Activated CD4-positive, alpha-beta memory T cell treated with anti-CD3 and anti-CD28 coated beads, Interleukin-2, amount 10 ng/mL, durations not matched to agents 7 days and 5 days (primary cell): ENCODE measurements at regions of chr16 and their contacts with region 1.

Region 1: DNA sequence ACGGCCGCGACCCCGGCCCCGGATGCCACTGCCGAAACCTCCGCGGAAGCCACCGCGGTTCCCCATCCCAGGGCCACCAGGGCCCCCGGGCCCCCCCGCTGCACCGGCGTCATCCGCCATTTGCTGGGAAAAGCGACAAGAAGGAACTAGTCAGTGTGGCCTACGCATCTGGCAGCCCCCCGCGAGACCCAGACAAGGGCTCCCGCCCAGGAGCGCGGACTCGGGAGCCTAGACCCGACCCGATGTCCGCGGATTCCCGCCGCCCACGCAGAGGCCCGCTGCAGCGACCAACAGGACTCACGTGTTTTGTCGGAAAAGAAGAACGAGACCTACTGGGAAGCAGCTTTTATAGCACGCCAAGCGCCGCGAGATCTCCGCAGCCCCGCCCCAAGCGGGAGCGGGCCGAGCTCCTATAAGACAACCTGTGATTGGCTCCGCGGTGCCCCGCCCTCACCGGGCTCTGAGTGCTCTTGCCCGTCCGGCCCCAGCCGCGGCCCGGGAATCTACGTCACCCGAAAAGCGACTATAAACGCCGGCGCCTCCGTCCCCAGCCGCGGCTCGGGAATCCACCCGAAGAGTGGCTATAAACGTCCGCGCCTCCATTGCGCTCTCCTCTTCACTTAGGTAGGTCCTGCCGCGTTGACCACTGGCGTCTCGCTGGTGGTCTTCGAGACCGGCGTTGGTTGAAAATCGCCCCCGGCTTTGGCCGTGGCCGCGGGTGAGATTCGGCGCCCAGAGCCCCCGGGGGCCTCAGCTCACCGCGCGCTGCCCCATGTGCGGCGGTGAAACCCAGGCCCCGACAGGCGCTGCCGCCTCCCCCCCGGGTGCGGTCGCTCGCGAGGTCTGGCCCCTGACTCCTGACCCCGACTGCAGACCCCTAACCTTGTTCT is at the start of gene RPS2:
- DNase-seq: peak; percentile 99
- H3K4me3 Mint-ChIP-seq: peak within 1 kb of the TSS; percentile 84
- H3K27ac Mint-ChIP-seq: peak within 1 kb of the TSS; percentile 95
- H3K4me1 Mint-ChIP-seq: peaks cover 54% of the 10 kb centered on the region
- H3K27me3 Mint-ChIP-seq: no peaks in the 10 kb centered on the region
- total RNA-seq, gene RPS2: 2,364 to 2,405 TPM

Region 2: GRCh38 chr16:1782352-1783091 is 182.2 kb before region 1 on chr16 and contains the starts of genes NUBP2 and SPSB3:
- CTCF ChIA-PET with region 1: interaction called, 3 read pairs
- POLR2A ChIA-PET with region 1: interaction called, 10 read pairs
- DNase-seq: peak; percentile 99
- H3K4me3 Mint-ChIP-seq: peak within 1 kb of the TSS; percentile 91
- H3K27ac Mint-ChIP-seq: peak within 1 kb of the TSS; percentile 77
- H3K4me1 Mint-ChIP-seq: peaks cover 22% of the 10 kb centered on the region
- H3K27me3 Mint-ChIP-seq: no peaks in the 10 kb centered on the region
- total RNA-seq, gene NUBP2: 40.8 to 43.5 TPM
- total RNA-seq, gene SPSB3: 46.4 to 47.7 TPM

Region 3: DNA sequence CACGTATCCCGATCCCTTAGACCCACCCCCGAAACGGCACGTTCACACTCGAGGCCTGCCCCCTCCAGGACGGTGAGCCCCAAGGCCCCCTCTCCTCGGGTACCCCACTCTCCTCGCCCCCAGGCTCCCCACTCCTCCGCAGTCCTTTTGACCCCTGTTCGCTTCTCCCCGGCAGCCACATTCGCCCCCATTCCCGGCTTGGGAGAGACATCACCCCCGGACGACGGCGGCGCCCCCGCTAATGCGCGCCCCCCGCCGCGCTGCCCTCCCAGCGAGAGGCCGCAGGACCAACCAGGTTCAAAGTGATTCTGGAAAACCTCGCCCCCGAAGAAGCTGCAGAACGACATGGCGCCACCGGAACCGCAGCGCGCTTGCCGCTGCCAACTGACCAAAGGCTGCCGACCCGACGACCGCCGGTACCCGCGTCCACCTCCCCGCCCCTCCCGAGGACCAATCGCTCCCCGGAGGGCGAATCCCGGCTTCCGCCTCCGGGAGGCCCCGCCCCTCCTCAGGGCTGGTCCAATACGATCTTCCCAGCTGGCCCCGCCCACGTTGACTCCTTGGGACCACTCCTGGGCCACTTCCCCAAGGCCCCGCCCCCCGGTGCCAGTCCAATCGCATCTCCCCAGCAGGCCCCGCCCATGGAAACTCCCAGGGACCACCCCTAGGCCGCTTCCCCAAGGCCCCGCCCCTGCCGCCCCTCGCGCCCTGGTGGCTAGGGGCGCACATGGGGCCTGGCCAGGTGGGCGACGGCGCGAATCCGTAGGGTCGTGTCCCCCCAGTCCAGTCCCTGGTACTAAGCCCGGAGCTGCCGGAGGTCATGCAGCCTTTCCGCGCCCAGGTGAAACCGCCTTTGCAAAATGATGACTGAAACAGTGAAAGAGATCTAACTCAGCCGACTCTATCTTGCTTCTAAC is 21.7 kb before region 1 on chr16 and contains the start of gene MSRB1:
- CTCF ChIA-PET with region 1: interaction called, 10 read pairs
- POLR2A ChIA-PET with region 1: interaction called, 32 read pairs
- DNase-seq: peak; percentile 100
- H3K4me3 Mint-ChIP-seq: peak within 1 kb of the TSS; percentile 84
- H3K27ac Mint-ChIP-seq: peak within 1 kb of the TSS; percentile 70
- H3K4me1 Mint-ChIP-seq: peaks cover 27% of the 10 kb centered on the region
- H3K27me3 Mint-ChIP-seq: no peaks in the 10 kb centered on the region
- total RNA-seq, gene MSRB1: 17.9 TPM

Region 4: DNA sequence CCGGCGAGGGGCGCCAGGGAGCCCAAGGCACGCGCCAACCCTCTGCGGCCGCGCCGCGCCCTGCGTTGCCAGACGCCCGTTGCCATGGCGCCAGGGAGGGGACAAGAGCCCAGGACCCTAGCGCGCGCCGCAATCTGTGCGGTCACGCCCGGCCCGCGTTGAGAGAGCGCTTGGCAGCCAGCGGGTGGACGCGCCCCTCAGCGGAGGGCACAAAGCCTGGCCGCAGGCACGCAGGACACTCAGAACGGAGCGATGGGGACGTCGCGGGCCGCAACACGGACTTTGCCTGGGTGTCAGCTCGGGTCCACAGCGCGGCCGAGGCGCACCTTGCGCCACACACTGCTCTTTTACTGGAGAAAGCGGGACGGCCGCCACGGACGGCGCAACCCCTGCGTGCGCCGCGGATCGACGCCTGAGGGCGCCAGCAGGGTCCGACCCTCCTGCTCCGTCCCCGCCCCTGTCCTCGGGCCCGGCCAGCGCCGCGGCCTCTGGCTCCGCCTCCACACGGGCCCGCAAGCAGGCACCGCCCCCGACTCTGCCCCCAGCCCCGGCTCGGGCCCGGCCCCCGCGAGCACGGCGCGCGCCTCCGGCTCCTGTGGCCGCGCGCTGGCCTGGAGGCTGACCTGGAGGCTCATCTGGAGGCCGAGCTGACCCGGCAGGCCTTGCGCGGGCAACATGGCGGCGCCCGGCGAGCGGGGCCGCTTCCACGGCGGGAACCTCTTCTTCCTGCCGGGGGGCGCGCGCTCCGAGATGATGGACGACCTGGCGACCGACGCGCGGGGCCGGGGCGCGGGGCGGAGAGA is 19.0 kb after region 1 on chr16 and contains the start of gene GFER:
- CTCF ChIA-PET with region 1: no interaction called
- POLR2A ChIA-PET with region 1: interaction called, 149 read pairs
- DNase-seq: peak; percentile 83
- H3K4me3 Mint-ChIP-seq: peak within 1 kb of the TSS; percentile 80
- H3K27ac Mint-ChIP-seq: peak within 1 kb of the TSS; percentile 32
- H3K4me1 Mint-ChIP-seq: peaks cover 24% of the 10 kb centered on the region
- H3K27me3 Mint-ChIP-seq: peaks cover 32% of the 10 kb centered on the region
- total RNA-seq, gene GFER: 29.1 to 32.0 TPM

Region 5: GRCh38 chr16:2009789-2010510 is 45.2 kb after region 1 on chr16 and contains the start of gene ZNF598:
- CTCF ChIA-PET with region 1: no interaction called
- POLR2A ChIA-PET with region 1: interaction called, 14 read pairs
- DNase-seq: peak; percentile 83
- H3K4me3 Mint-ChIP-seq: peak within 1 kb of the TSS; percentile 92
- H3K27ac Mint-ChIP-seq: peak within 1 kb of the TSS; percentile 88
- H3K4me1 Mint-ChIP-seq: peaks cover 41% of the 10 kb centered on the region
- H3K27me3 Mint-ChIP-seq: no peaks in the 10 kb centered on the region
- total RNA-seq, gene ZNF598: 52.1 to 53.6 TPM